HAP-1 (cell line): ENCODE measurements at regions of chr20 and their contacts with region 1.

Region 1: DNA sequence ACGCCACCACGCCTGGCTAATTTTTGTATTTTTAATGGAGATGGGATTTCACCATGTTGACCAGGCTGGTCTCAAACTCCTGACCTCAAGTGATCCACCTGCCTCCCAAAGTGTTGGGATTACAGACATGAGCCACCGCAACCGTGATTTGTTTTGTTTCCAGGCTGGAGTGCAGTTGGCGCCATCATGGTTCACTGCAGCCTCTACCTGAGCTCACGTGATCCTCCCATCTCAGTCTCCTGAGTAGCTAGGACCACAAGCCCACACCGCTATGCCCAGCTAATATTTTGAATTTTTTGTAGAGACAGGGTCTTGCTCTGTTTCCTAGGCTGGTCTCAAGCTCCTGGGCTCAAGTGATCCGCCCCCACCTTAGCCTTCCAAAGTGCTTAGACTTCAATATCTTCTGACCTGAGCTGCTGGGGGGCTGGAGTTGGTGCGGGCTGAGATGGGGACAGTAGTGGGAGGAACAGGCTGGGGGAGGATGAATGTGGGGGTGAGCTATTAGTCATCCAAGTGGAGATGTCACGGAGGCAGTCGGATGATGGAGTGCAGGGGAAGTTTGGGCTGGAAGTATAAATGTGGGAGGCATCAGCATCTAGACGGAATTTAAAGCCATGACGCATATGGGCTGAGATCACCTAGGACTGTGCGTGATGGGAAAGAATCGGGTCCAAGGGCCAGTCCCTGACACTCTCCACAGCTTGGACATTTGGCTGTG is 23.1 kb upstream of the ZMYND8 start:
- DNase-seq: no peak
- H3K4me3 ChIP-seq: no peak overlapping the region
- H3K4me1 ChIP-seq: peaks cover 5% of the 10 kb centered on the region; the same call in 1 of the 2 replicates
- H3K27me3 ChIP-seq: no peaks in the 10 kb centered on the region

Region 2: DNA sequence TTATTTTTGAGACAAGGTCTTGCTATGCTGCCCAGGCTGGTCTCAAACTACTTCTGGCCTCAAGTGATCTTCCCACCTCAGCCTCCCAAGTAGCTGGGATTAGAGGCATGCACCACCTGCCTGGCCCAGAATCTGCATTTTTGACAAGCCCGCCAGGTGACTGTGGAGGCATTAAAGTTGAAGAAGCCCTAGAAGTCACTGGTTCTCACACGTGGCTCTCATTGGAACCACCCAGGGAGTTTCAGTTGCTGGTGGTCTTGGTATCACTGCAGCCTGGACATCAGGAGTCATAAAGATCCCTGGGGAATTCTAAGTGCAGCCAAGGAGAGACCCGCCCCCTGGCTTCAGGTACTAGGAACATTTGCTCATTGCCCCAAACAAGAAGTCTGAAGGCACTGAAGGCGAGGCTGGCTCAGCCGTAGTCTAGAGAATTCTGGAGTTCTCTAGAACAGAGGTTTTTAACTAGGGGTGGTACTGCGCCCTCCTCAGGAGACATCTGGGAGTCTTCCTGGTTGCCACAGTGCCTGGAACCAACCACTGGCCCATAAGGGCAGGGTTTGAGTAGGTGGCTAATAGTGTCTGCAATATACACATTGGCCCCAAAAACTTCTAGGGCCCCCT is 205.9 kb before region 1 on chr20:
- in situ Hi-C with region 1: no loop called
- DNase-seq: no peak
- H3K4me3 ChIP-seq: no peak overlapping the region
- H3K4me1 ChIP-seq: no peaks in the 10 kb centered on the region
- H3K27me3 ChIP-seq: peaks cover 18% of the 10 kb centered on the region

Region 3: GRCh38 chr20:47274401-47275108 is 105.0 kb before region 1 on chr20:
- in situ Hi-C with region 1: loop called (anchors 5 kb)
- DNase-seq: no peak
- H3K4me3 ChIP-seq: no peak overlapping the region
- H3K4me1 ChIP-seq: no peaks in the 10 kb centered on the region
- H3K27me3 ChIP-seq: no peaks in the 10 kb centered on the region

Region 4: DNA sequence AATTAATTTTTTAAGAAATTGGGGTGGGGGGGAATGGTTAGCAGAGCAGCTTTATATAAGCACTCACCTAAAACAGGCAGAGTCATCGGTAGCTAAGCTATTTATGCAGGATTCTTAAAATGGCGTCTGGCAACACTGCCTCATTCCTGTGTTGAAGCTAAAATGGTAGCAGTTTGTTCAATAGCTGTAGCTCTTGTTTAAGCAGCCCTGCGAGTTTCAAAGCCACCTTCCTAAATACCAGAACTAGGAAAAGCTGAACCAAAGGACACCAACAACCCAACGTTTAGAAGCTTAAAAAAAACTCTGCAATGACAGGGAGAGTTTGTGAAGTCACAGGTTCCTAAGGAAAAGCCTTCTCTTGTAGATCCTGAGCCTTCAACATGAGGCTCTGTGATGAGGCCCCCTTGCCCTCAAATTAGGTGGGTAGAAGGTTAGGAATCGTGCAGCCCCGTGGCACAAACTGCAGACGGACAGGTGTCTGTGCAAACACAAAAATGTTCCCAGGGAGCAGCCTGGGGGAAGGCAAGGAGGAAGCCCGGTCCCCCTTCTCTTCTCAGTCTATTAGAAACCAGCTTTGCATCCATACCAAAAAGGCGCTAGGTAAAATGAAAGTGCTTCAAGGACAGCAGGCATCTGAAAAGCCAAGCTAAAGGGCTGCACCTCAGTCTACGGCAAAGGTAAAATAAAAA is 27.8 kb before region 1 on chr20:
- in situ Hi-C with region 1: no loop called
- DNase-seq: no peak
- H3K4me3 ChIP-seq: peak overlapping the region; percentile 14
- H3K4me1 ChIP-seq: peaks cover 87% of the 10 kb centered on the region
- H3K27me3 ChIP-seq: no peaks in the 10 kb centered on the region